ENCODE measurements at regions of chr3 and their contacts with region 1.

Region 1: DNA sequence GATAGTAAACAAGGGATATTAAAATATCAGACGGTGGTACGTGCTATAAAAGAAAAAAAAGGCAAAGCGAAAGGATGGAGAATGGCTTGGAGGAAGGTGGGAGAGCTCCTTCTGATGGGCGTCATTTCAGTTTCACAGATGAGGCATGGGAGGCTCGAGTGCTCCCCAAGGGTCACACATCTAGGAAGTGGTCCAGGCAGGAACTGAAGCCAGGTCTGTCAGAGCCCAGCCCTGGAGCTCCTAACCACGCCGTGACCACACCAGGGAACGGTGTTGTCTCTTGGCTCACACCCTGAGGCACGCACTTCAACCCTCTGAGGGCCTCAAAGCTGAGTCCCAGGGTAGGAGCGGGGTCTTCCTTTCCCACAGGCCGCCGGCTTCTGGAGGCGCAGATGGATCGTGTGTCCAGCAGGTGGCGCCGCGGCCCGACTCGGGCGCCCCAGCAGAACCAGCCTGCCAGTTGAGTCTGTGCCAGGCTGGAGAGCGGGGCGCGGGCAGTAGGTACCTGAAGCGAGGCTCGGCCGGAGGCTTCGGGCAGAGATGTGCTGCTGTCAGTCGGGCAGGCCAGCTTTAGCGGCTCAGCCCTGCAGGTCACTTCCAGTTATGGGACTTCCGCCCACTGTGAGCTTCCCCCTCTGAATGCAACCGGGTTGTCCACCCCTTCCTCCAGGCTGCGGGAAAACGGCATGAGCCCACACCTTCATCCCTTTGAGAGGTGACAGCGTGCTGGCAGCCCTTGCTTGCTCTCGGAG is 68.1 kb downstream of the SLC6A1 start:
- DNase-seq: peak; percentile 50
- ATAC-seq: peak; percentile 87
- H3K4me3 ChIP-seq: peak overlapping the region in 1 of 2 experiments; percentile 25; a peak in 2 of 4 replicates
- H3K27ac ChIP-seq: no peak overlapping the region; the same call in 1 of the 2 replicates
- H3K4me1 ChIP-seq: peaks cover 3 to 10% of the 10 kb centered on the region in 2 experiments; a peak in 2 of 4 replicates
- H3K27me3 ChIP-seq: peaks cover 5% of the 10 kb centered on the region; the same call in 1 of the 2 replicates
- CTCF ChIP-seq: peak; percentile 84 to 91 (median 84)
- POLR2A ChIP-seq: no peak
- RAD21 ChIP-seq: peak; percentile 98

Region 2: GRCh38 chr3:10758304-10759061 is 302.2 kb before region 1 on chr3:
- CTCF ChIA-PET with region 1: interaction called, 21 read pairs
- POLR2A ChIA-PET with region 1: no interaction called
- RAD21 ChIA-PET with region 1: interaction called, 6 to 11 read pairs
- intact Hi-C with region 1: loop called (anchors 1 kb)
- DNase-seq: peak; percentile 51
- ATAC-seq: peak; percentile 97
- H3K4me3 ChIP-seq: no peak overlapping the region
- H3K27ac ChIP-seq: no peak overlapping the region
- H3K4me1 ChIP-seq: no peaks in the 10 kb centered on the region
- H3K27me3 ChIP-seq: peaks cover 37% of the 10 kb centered on the region
- CTCF ChIP-seq: peak; percentile 48 to 94 (median 64); a peak in 5 of 6 replicates
- POLR2A ChIP-seq: no peak
- RAD21 ChIP-seq: peak; percentile 93

Region 3: GRCh38 chr3:10883478-10884234 is 177.0 kb before region 1 on chr3:
- CTCF ChIA-PET with region 1: no interaction called
- POLR2A ChIA-PET with region 1: no interaction called
- RAD21 ChIA-PET with region 1: interaction called in 1 of 2 experiments, 5 read pairs
- intact Hi-C with region 1: loop called (anchors 2 kb)
- DNase-seq: peak; percentile 8
- ATAC-seq: peak; percentile 76
- H3K4me3 ChIP-seq: no peak overlapping the region
- H3K27ac ChIP-seq: no peak overlapping the region
- H3K4me1 ChIP-seq: no peaks in the 10 kb centered on the region
- H3K27me3 ChIP-seq: peaks cover 56% of the 10 kb centered on the region
- CTCF ChIP-seq: peak; percentile 76 to 87 (median 77); a peak in 5 of 6 replicates
- POLR2A ChIP-seq: no peak
- RAD21 ChIP-seq: peak; percentile 71

Region 4: GRCh38 chr3:11034309-11034985 is 26.2 kb before region 1 on chr3:
- CTCF ChIA-PET with region 1: no interaction called
- POLR2A ChIA-PET with region 1: no interaction called
- RAD21 ChIA-PET with region 1: no interaction called
- intact Hi-C with region 1: no loop called
- DNase-seq: no peak
- ATAC-seq: peak; percentile 74
- H3K4me3 ChIP-seq: no peak overlapping the region
- H3K27ac ChIP-seq: no peak overlapping the region
- H3K4me1 ChIP-seq: no peaks in the 10 kb centered on the region
- H3K27me3 ChIP-seq: peaks cover 19% of the 10 kb centered on the region
- CTCF ChIP-seq: no peak
- POLR2A ChIP-seq: no peak
- RAD21 ChIP-seq: no peak

Region 5: DNA sequence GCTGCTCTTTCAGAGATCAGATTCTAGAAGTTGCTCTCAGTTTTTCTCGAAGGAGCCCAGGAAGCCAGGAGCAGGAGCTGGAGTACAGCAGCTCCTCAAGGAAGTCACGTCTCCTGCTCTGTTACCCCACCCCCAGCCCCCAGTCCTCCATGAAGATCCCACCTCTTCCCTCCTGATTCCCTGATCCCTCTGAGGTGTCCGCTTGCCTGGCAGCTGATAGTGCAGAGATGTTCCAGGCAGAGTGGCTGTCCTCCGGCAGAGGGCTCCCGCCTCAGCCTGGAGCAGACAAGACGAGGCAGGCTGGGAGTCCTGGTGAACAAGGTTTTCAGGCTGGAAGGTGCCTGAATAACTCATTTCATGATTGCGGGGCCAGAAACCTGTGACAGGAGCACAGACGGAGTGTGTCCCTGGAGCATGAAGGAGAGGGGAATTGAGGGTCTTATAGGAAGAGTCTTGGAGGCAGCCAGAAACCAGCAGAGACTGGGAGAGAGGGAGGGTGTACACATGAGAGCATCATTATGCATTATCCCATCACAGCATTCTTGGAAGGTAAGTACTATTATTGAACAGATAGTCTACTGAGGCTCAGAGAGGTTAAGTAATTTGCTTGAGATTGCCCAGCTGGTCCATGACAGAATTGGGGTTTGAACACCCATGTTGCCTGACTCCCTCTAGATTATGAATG is 94.8 kb after region 1 on chr3:
- CTCF ChIA-PET with region 1: interaction called, 5 read pairs
- POLR2A ChIA-PET with region 1: no interaction called
- RAD21 ChIA-PET with region 1: no interaction called
- intact Hi-C with region 1: loop called (anchors 1 kb)
- DNase-seq: peak; percentile 47
- ATAC-seq: peak; percentile 90
- H3K4me3 ChIP-seq: peak overlapping the region; percentile 48 to 77
- H3K27ac ChIP-seq: no peak overlapping the region; the same call in 1 of the 2 replicates
- H3K4me1 ChIP-seq: peaks cover 10 to 37% of the 10 kb centered on the region in 2 experiments; a peak in 3 of 4 replicates
- H3K27me3 ChIP-seq: no peaks in the 10 kb centered on the region
- CTCF ChIP-seq: peak; percentile 81 to 89 (median 85)
- POLR2A ChIP-seq: no peak
- RAD21 ChIP-seq: peak; percentile 87

Region 6: GRCh38 chr3:11335056-11335608 is 274.5 kb after region 1 on chr3:
- CTCF ChIA-PET with region 1: interaction called, 47 read pairs
- POLR2A ChIA-PET with region 1: interaction called, 3 read pairs
- RAD21 ChIA-PET with region 1: interaction called, 5 to 9 read pairs
- intact Hi-C with region 1: loop called (anchors 1 kb)
- DNase-seq: peak; percentile 51
- ATAC-seq: peak; percentile 88
- H3K4me3 ChIP-seq: no peak overlapping the region
- H3K27ac ChIP-seq: no peak overlapping the region
- H3K4me1 ChIP-seq: peaks cover 5 to 12% of the 10 kb centered on the region in 2 experiments; a peak in 3 of 4 replicates
- H3K27me3 ChIP-seq: no peaks in the 10 kb centered on the region
- CTCF ChIP-seq: peak; percentile 53 to 81 (median 66)
- POLR2A ChIP-seq: no peak
- RAD21 ChIP-seq: peak; percentile 87

Measured in HCT116 (cell line).